Esophagus squamous epithelium (tissue), 5 donors: ENCODE measurements at regions of chr15 and their contacts with region 1.

Region 1: GRCh38 chr15:57743424-57743823 is 36.9 kb downstream of the POLR2M start:
- DNase-seq: no peak
- H3K4me3 ChIP-seq: no peak overlapping the region
- H3K27ac ChIP-seq: no peak overlapping the region
- H3K4me1 ChIP-seq: no peaks in the 10 kb centered on the region
- H3K27me3 ChIP-seq: no peaks in the 10 kb centered on the region
- CTCF ChIP-seq: no peak
- POLR2A ChIP-seq: no peak

Region 2: DNA sequence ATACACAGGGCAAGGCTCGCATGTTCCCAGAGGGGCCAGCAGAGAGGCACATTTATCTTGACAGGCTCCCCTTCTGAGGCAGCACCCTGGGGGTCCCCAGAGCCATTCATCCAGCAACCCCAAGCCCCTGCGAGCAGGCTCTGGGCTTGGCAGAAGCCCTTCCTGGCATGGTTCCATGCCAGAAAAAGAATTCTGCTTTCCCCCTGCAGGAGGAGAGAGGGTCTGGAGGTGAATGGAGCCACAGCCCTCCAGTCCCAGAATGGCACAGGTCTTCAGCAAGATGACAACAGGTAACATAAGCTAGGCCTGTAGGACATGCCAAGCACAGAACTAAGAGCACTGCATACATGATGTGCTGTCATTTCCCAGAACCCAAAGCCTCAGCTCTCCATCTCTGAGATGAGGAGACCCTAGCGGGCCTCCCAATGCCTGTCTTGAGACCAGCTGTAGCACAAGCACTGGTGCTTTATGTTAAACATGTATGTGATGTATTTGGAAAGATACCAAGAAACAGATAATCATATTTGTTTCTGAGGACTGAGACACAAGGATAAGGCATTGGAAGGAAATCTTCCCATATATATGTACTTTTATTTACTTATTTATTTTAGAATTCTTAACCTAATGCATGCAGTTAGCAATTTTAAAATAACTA is 200.5 kb after region 1 on chr15:
- intact Hi-C with region 1: no loop called
- DNase-seq: no peak
- H3K4me3 ChIP-seq: no peak overlapping the region
- H3K27ac ChIP-seq: no peak overlapping the region
- H3K4me1 ChIP-seq: no peaks in the 10 kb centered on the region
- H3K27me3 ChIP-seq: peaks cover 0 to 28% (median 0%) of the 10 kb centered on the region in 4 donors
- CTCF ChIP-seq: no peak
- POLR2A ChIP-seq: no peak

Region 3: GRCh38 chr15:58066042-58066867 is 322.8 kb after region 1 on chr15:
- intact Hi-C with region 1: loop called (anchors 10 kb)
- DNase-seq: no peak
- H3K4me3 ChIP-seq: peak overlapping the region; percentile 24 to 64 (median 48)
- H3K27ac ChIP-seq: peak overlapping the region in 1 of 4 donors; percentile 4
- H3K4me1 ChIP-seq: peaks cover 7 to 19% (median 8%) of the 10 kb centered on the region in 3 donors
- H3K27me3 ChIP-seq: peaks cover 12 to 81% (median 18%) of the 10 kb centered on the region in 4 donors
- CTCF ChIP-seq: peak; percentile 37 to 80 (median 68)
- POLR2A ChIP-seq: no peak